ENCODE measurements at regions of chr10 and their contacts with region 1.

Region 1: GRCh38 chr10:21278491-21279239 is 246.8 kb downstream of the SKIDA1 start:
- DNase-seq: peak; percentile 95
- H3K4me3 Mint-ChIP-seq: no peak overlapping the region
- H3K27ac Mint-ChIP-seq: no peak overlapping the region
- H3K4me1 Mint-ChIP-seq: peaks cover 8% of the 10 kb centered on the region
- H3K27me3 Mint-ChIP-seq: no peaks in the 10 kb centered on the region
- CTCF ChIP-seq: peak; percentile 92

Region 2: GRCh38 chr10:21355561-21356011 is 76.9 kb after region 1 on chr10:
- CTCF ChIA-PET with region 1: interaction called, 11 read pairs
- POLR2A ChIA-PET with region 1: no interaction called
- intact Hi-C with region 1: no loop called
- DNase-seq: peak; percentile 31
- H3K4me3 Mint-ChIP-seq: no peak overlapping the region
- H3K27ac Mint-ChIP-seq: peak overlapping the region; percentile 4
- H3K4me1 Mint-ChIP-seq: peaks cover 15% of the 10 kb centered on the region
- H3K27me3 Mint-ChIP-seq: no peaks in the 10 kb centered on the region
- CTCF ChIP-seq: no peak

Region 3: DNA sequence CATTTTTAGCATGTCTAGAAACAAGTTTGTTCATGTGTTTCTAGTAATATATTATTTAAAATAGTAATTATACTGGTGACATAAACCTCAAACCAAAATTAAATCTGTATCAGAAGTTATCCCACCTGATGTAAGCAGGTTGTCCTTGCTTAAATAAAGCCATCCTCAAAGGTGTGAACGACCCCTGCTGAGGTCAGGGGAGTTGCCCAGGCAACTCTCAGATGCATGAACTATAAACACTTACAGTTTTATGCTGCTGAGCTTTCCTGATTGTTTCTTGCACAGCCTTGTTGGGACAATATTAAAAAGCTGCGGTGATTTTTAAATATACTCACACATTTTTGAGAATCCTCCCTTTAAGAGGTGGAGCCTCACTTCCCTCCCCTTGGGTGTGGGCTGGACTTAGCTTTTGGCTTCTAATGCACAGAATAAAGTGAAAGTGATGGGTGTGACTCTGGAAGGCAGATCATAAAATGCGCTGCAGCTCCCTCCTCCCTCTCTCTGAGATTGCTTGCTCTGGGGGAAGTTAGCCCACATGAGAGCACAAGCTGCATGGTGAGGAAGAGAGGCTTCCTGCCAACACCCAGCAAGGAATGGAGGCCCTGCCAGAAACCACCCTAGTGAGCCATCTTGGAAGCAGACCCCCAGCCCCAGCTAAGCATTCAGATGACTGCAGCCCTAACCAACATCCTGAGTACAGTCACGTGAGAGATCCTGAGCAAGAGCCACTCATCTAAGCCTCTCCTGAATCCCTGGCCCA is 94.2 kb after region 1 on chr10:
- CTCF ChIA-PET with region 1: interaction called, 13 read pairs
- POLR2A ChIA-PET with region 1: no interaction called
- intact Hi-C with region 1: no loop called
- DNase-seq: peak; percentile 92
- H3K4me3 Mint-ChIP-seq: peak overlapping the region; percentile 52
- H3K27ac Mint-ChIP-seq: no peak overlapping the region
- H3K4me1 Mint-ChIP-seq: peaks cover 25% of the 10 kb centered on the region
- H3K27me3 Mint-ChIP-seq: no peaks in the 10 kb centered on the region
- CTCF ChIP-seq: no peak

Region 4: GRCh38 chr10:21732067-21732772 is 453.6 kb after region 1 on chr10:
- CTCF ChIA-PET with region 1: no interaction called
- POLR2A ChIA-PET with region 1: no interaction called
- intact Hi-C with region 1: loop called (anchors 1 kb)
- DNase-seq: peak; percentile 41
- H3K4me3 Mint-ChIP-seq: no peak overlapping the region
- H3K27ac Mint-ChIP-seq: no peak overlapping the region
- H3K4me1 Mint-ChIP-seq: peaks cover 14% of the 10 kb centered on the region
- H3K27me3 Mint-ChIP-seq: no peaks in the 10 kb centered on the region
- CTCF ChIP-seq: peak; percentile 52

Measured in MCF 10A (cell line).